PC-3 (cell line): ENCODE measurements at regions of chr2 and their contacts with region 1.

Region 1: DNA sequence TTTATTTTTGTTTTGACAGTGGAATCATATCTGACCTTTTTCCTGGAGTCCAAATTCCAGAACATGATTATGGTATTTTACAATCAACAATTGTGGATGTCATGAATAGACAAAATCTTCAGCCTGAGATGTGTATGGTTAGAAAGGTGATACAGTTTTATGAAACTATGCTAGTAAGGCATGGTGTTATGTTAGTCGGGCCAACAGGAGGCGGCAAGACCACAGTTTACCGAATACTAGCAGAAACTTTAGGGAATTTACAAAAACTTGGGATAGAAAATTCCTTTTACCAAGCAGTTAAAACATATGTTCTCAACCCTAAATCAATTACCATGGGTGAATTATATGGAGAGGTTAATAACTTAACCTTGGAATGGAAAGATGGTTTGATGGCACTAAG is 137.0 kb downstream of the DNAH6 start:
- DNase-seq: no peak
- ATAC-seq: no peak
- H3K4me3 ChIP-seq: no peak overlapping the region
- H3K27ac ChIP-seq: no peak overlapping the region
- H3K4me1 ChIP-seq: no peaks in the 10 kb centered on the region
- H3K27me3 ChIP-seq: peaks cover 67% of the 10 kb centered on the region
- CTCF ChIP-seq: peak; percentile 54

Region 2: DNA sequence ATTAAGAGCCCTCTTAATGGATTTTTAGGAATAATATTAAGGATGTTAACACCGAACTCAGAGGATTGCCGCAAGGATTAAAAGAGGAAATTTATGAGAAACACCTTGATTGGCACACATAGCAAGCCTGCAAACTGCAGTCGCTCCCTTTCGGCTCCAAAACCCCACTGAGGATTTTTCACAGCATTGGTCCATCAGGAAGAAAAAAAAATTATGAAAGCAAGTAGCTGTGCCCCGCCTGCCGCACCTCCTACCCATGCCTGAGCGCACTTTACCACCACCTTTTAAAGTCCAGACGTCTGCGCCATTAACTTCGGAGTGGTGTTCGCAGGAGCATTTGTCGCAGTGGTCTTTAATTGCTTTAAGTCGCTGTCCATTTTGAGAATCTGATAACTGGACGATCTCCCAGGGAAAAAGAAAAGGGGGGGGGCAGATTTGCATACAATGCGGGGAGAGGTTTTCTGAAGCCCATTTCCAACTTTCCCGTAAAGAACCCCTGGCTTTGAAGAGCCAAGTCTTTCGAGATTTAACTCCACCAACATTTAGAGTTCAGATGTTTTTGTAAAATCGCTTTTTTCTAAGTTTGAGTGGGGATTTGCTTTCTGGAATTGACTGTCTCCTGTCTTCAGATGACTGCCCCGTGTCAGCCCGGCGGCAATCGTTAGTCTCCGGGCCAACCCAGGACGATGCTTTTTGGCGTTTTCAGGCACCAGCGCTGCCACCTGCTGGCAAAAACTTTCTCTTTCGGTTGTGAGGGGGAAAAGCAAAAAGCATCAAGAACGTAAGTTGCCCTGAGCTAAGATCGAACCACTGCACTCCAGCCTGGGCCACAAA is 228.5 kb after region 1 on chr2:
- CTCF ChIA-PET with region 1: no interaction called
- POLR2A ChIA-PET with region 1: no interaction called
- intact Hi-C with region 1: loop called (anchors 1 kb)
- DNase-seq: peak; percentile 91
- ATAC-seq: peak; percentile 90
- H3K4me3 ChIP-seq: peak overlapping the region; percentile 77
- H3K27ac ChIP-seq: no peak overlapping the region
- H3K4me1 ChIP-seq: peaks cover 5% of the 10 kb centered on the region
- H3K27me3 ChIP-seq: peaks cover 15% of the 10 kb centered on the region
- CTCF ChIP-seq: peak; percentile 87